Spleen (tissue), 13 donors: ENCODE measurements at regions of chr9 and their contacts with region 1.

Region 1: DNA sequence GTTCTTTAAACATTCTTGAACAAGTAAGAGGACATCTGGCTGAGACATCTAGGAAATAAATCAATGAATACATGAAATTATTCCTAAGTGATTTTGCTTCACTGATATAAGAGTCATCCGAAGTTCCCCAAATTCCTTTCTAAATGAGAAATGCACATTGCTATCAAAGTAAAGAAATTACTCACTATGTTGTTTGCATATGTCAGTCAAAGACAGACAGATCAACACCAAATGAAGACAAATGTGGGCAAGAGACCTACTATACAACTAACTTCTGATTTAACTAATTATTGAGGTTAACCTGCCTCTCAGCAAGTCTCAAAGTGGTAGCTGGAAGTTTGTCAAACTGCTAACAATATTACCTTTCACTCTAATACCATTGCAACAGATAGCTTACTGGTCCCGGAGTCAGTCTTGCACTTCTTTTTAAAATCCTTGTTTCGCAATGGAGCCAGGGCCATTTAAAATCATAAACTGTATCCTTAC is 13.2 kb downstream of the TUT7 start:
- DNase-seq: no peak
- H3K4me3 ChIP-seq: no peak overlapping the region
- H3K27ac ChIP-seq: peak overlapping the region in 6 of 8 donors; percentile 2 to 84 (median 36)
- H3K4me1 ChIP-seq: peaks cover 22 to 89% (median 47%) of the 10 kb centered on the region in 6 donors
- H3K27me3 ChIP-seq: no peaks in the 10 kb centered on the region
- CTCF ChIP-seq: no peak
- POLR2A ChIP-seq: no peak

Region 2: DNA sequence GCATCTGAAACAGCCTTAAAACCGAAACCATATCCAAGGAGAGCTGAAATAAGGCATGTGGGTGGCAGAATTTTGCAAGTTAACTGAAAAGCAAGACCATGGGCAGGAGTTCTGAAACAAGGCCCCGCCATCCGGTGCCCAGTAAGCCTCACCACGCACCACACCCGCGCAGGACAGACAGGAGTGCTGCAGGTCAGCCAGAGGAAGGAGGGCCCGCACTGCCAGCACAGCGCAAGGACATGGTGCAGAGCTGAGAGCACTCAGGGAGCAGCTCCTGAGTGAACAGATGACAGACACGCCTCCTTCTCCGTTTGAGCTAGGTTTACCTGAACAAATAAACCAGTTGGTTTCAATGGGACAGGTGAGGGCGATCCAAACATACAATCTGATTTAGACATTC is 42.2 kb before region 1 on chr9:
- intact Hi-C with region 1: loop called (anchors 10 kb)
- DNase-seq: no peak
- H3K4me3 ChIP-seq: no peak overlapping the region
- H3K27ac ChIP-seq: peak overlapping the region in 1 of 8 donors; percentile 12
- H3K4me1 ChIP-seq: peaks cover 0 to 8% (median 0%) of the 10 kb centered on the region in 6 donors
- H3K27me3 ChIP-seq: no peaks in the 10 kb centered on the region
- CTCF ChIP-seq: no peak
- POLR2A ChIP-seq: no peak